ENCODE measurements at regions of chr1 and their contacts with region 1.

Region 1: GRCh38 chr1:94599095-94599813 is 57.7 kb upstream of the F3 start:
- DNase-seq: peak; percentile 49
- ATAC-seq: peak; percentile 55
- H3K4me3 ChIP-seq: no peak overlapping the region
- H3K27ac ChIP-seq: no peak overlapping the region
- H3K4me1 ChIP-seq: peaks cover 29% of the 10 kb centered on the region
- H3K27me3 ChIP-seq: no peaks in the 10 kb centered on the region
- CTCF ChIP-seq: peak; percentile 55

Region 2: GRCh38 chr1:94532077-94532476 is 67.2 kb before region 1 on chr1:
- CTCF ChIA-PET with region 1: no interaction called
- POLR2A ChIA-PET with region 1: no interaction called
- intact Hi-C with region 1: loop called (anchors 1 kb)
- DNase-seq: peak; percentile 67
- ATAC-seq: peak; percentile 93
- H3K4me3 ChIP-seq: no peak overlapping the region
- H3K27ac ChIP-seq: no peak overlapping the region
- H3K4me1 ChIP-seq: peaks cover 15% of the 10 kb centered on the region; the same call in 1 of the 2 replicates
- H3K27me3 ChIP-seq: no peaks in the 10 kb centered on the region
- CTCF ChIP-seq: peak; percentile 62

Region 3: GRCh38 chr1:94553323-94553730 is 45.9 kb before region 1 on chr1:
- CTCF ChIA-PET with region 1: no interaction called
- POLR2A ChIA-PET with region 1: no interaction called
- intact Hi-C with region 1: no loop called
- DNase-seq: peak; percentile 28
- ATAC-seq: peak; percentile 42
- H3K4me3 ChIP-seq: no peak overlapping the region
- H3K27ac ChIP-seq: no peak overlapping the region
- H3K4me1 ChIP-seq: peaks cover 24% of the 10 kb centered on the region
- H3K27me3 ChIP-seq: no peaks in the 10 kb centered on the region
- CTCF ChIP-seq: no peak

Region 4: DNA sequence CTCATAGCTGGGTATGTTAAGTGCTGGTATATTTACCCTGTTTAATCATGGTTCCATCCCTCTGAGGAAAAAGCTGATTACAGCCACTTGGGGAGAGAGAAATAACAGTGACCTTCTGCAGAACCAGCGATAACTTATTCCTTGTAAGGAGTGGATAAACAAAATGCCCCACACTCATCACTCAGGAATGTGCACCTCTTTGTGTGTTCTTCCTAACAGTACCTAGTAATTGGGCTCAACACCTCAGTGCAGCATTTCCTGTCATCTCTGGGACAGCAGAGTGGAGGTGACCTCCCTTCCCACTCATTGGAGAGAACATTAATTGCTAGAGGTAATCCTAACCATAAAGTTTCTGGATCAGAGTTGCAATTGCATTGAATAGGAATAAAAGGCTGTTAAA is 54.8 kb after region 1 on chr1:
- CTCF ChIA-PET with region 1: no interaction called
- POLR2A ChIA-PET with region 1: no interaction called
- intact Hi-C with region 1: loop called (anchors 5 kb)
- DNase-seq: peak; percentile 76
- ATAC-seq: peak; percentile 90
- H3K4me3 ChIP-seq: no peak overlapping the region
- H3K27ac ChIP-seq: no peak overlapping the region
- H3K4me1 ChIP-seq: peaks cover 14% of the 10 kb centered on the region
- H3K27me3 ChIP-seq: no peaks in the 10 kb centered on the region
- CTCF ChIP-seq: no peak

Region 5: DNA sequence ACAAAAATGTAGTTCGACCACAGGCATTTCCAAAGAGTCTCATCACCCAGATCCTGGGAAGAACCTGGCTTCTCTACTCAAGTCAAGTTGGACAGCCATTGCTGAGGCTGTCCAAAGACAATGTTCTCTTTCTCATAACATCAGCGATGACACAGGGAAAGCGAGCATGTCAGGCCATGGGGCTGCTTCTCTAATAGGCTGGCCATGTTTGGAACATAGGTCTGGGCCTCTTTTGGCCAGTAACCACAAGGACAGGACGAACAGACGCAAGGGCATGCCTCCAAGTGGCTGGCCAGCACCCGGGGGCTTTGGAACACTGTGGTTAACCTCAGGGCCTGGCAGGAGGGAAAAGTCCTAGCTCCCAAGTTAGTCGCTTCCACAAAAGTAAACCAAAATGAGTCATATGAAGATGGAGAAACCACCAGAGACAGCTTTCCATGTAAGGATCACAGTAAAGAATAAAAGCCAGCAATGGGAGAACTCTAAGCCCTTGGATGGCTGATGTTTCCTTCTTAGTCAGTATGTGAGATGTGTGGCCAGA is 140.3 kb after region 1 on chr1:
- CTCF ChIA-PET with region 1: no interaction called
- POLR2A ChIA-PET with region 1: no interaction called
- intact Hi-C with region 1: loop called (anchors 5 kb)
- DNase-seq: peak; percentile 76
- ATAC-seq: peak; percentile 52
- H3K4me3 ChIP-seq: no peak overlapping the region
- H3K27ac ChIP-seq: no peak overlapping the region
- H3K4me1 ChIP-seq: peaks cover 22% of the 10 kb centered on the region
- H3K27me3 ChIP-seq: no peaks in the 10 kb centered on the region
- CTCF ChIP-seq: no peak

Region 6: DNA sequence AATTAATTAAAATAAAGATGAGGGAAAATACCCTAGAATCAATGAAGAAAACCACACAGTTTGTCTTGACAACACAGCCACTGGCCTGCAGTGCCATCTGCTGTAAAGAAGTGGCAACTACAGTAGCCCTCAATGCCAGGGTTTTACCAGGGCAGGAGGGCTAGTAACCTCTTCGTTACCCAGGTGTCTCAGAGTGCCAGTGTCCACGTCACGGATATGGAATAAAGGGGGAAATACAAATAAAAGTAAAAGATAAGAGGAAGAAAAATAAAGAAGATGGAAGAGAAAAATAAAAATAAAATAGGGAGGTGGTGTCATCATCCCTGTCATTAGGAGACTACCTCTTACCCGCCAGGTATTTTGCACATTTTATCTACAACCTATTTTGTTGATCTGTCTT is 206.7 kb after region 1 on chr1:
- CTCF ChIA-PET with region 1: no interaction called
- POLR2A ChIA-PET with region 1: no interaction called
- intact Hi-C with region 1: loop called (anchors 2 kb)
- DNase-seq: peak; percentile 77
- ATAC-seq: peak; percentile 36; the same call in 1 of the 2 replicates
- H3K4me3 ChIP-seq: no peak overlapping the region
- H3K27ac ChIP-seq: no peak overlapping the region
- H3K4me1 ChIP-seq: peaks cover 6% of the 10 kb centered on the region
- H3K27me3 ChIP-seq: no peaks in the 10 kb centered on the region
- CTCF ChIP-seq: peak; percentile 92

Region 7: GRCh38 chr1:95049935-95050334 is 450.7 kb after region 1 on chr1:
- CTCF ChIA-PET with region 1: no interaction called
- POLR2A ChIA-PET with region 1: interaction called, 16 read pairs
- intact Hi-C with region 1: no loop called
- DNase-seq: no peak
- ATAC-seq: no peak
- H3K4me3 ChIP-seq: no peak overlapping the region
- H3K27ac ChIP-seq: no peak overlapping the region
- H3K4me1 ChIP-seq: no peaks in the 10 kb centered on the region
- H3K27me3 ChIP-seq: no peaks in the 10 kb centered on the region
- CTCF ChIP-seq: no peak

Measured in PC-3 (cell line).